Dendritic cell treated with granulocyte-macrophage colony-stimulating factor and Interleukin-4, amounts not matched to agents 40 ng/mL and 50 ng/mL, for 4 days (primary cell): ENCODE measurements at regions of chr9 and their contacts with region 1.

Region 1: DNA sequence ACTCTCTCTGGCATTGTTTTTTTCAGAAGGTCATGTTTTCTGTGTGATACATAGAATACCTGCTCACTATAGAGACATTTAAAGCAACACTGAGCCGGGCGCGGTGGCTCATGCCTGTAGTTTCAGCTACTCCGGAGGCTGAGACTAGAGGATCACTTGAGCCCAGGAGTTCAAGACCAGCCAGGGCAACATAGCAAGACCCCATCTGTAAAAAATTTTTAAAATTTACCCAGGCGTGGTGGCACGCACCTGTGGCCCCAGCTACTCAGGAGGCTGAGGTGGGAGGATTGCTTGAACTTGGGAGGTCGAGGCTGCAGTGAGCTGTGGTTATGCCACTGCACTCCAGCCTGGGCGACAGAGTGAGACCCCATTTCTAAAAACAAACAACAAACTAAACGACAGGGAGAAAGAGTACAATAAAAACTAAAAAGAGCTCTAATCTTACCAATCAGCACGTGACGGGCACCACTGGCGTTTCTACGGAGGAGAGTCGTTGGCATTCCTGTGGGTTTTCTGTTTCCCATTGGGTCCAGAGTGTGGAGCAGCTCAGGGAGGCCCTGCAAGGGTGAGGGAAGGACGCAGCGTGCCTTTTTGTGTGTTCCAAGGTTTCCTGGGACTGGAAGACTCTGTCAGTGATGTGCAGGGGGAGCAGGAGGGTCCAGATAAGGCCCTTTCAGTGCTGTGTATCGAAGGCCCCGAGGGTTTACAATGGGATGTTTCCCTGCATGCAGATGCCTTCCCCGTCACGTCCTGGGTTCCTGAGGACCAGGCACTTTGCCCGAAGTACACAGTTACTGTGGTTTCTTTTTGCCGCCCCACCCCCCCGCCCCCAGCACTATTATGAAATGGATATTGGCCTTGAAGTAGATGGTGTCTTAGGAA is 7.2 kb upstream of the RNU6ATAC start:
- H3K4me3 Mint-ChIP-seq: no peak overlapping the region
- H3K27ac Mint-ChIP-seq: peak overlapping the region; percentile 70
- H3K4me1 Mint-ChIP-seq: peaks cover 35% of the 10 kb centered on the region
- H3K27me3 Mint-ChIP-seq: peaks cover 7% of the 10 kb centered on the region

Region 2: DNA sequence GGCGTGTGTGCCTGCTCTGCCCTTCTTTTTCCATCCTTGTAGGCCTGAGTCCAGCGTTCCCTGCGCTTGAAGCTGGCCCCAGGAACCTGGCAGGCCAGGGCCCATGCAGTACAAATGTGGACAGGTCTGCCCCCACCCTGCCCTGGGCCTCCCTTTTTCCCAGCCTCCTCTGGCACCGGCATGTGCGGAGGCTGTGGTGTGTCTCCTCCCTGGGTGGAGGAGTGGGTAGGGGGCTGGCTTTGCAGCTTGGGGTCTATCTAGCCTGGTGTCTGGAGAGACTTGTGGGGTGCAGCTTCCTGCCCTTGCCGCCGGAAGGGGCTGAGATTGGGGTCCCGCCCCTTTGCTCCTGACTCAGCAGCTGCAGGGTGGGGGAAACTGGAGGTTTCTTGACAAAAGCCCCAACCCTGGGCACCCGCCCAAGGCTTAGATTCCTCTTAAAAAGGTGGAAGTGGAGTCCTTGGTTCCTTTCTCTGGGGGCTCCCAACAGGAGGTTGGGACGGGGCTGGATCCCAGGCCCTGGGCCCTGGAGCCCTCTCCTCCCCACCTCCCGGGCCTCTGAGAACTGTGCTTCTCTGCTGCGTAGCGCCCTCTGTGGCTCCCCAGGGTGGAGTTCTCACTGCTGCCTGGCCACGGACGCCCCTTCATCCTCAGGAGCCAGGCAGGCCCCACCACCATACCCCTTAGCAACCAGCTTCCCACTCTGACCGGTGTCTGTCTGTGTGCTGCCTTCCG is 172.7 kb after region 1 on chr9:
- intact Hi-C with region 1: loop called (anchors 5 kb)
- H3K4me3 Mint-ChIP-seq: peak overlapping the region; percentile 62
- H3K27ac Mint-ChIP-seq: no peak overlapping the region
- H3K4me1 Mint-ChIP-seq: no peaks in the 10 kb centered on the region
- H3K27me3 Mint-ChIP-seq: no peaks in the 10 kb centered on the region

Region 3: GRCh38 chr9:134443168-134444037 is 271.8 kb after region 1 on chr9:
- intact Hi-C with region 1: loop called (anchors 1 kb)
- H3K4me3 Mint-ChIP-seq: no peak overlapping the region
- H3K27ac Mint-ChIP-seq: peak overlapping the region; percentile 81
- H3K4me1 Mint-ChIP-seq: peaks cover 57% of the 10 kb centered on the region
- H3K27me3 Mint-ChIP-seq: peaks cover 9% of the 10 kb centered on the region

Region 4: DNA sequence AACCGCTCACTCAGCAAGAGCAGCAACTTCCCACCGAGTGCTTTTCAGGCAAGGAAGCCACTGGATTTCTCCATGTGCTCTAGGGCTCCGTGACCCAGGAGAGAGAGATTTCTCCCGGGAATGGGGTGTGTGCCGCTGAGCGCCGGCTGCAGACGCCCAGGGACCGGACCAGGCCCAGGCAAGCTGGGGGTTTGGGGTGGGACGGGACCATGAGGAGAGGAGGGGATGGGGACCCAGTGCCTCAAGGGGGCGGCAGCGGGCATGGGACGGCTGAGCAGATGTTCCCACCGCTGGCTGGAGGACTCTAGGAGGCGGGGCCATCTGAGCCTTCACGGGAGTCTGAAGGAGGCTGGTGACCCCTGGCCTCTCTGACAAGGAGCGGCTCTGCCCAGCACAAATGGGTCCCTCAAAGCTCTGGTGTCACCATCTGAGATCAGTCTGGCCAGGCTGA is 1500.1 kb after region 1 on chr9:
- intact Hi-C with region 1: no loop called
- H3K4me3 Mint-ChIP-seq: no peak overlapping the region
- H3K27ac Mint-ChIP-seq: no peak overlapping the region
- H3K4me1 Mint-ChIP-seq: no peaks in the 10 kb centered on the region
- H3K27me3 Mint-ChIP-seq: peaks cover 3% of the 10 kb centered on the region